ENCODE measurements at regions of chr15 and their contacts with region 1.

Region 1: DNA sequence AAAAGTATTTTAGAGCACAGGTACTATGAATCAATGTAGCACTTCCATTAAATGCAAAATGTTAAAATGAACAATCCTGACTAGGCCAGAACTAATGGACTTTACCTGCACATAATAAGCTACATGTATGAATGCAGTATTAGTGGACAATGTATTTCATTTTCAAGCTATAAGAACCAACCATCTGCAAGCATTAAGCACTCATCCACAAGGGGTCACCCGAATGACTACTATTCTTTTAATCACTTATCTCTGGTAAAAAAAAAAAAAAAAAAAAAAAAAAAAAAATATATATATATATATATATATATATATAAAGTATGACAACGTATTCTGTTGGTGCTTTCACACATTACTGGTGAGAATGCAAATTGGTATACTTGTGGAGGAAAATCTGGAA is 7.2 kb downstream of the HERC1 start:
- DNase-seq: no peak
- ATAC-seq: peak in 1 of 4 donors; percentile 28
- H3K4me3 ChIP-seq: no peak overlapping the region
- H3K27ac ChIP-seq: no peak overlapping the region
- H3K4me1 ChIP-seq: peaks cover 36% of the 10 kb centered on the region
- H3K27me3 ChIP-seq: no peaks in the 10 kb centered on the region
- CTCF ChIP-seq: peak; percentile 19

Region 2: GRCh38 chr15:63712828-63713520 is 113.6 kb before region 1 on chr15:
- intact Hi-C with region 1: no loop called
- DNase-seq: no peak
- ATAC-seq: no peak
- H3K4me3 ChIP-seq: no peak overlapping the region
- H3K27ac ChIP-seq: no peak overlapping the region
- H3K4me1 ChIP-seq: no peaks in the 10 kb centered on the region
- H3K27me3 ChIP-seq: no peaks in the 10 kb centered on the region
- CTCF ChIP-seq: no peak

Region 3: DNA sequence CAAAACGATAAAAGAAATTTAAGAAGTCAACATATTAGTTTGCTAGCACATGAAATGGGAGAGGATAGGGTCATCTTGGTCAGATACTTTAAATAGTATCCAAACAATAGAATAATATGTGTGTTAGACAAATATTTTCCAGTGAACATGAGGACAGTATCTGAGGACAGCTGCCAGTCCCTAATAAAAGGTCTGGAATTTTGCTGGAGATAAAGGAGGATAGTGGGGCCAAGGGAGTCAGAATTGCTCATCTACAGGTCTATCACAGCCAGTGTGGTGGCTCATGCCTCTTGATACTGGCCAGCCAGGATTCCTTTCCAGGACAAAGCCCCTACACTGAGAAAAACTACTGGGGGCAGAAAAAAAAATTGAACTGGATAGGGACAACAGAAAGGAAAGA is 66.8 kb before region 1 on chr15:
- intact Hi-C with region 1: loop called in 1 of 2 experiments (anchors 5 kb)
- DNase-seq: no peak
- ATAC-seq: peak in 2 of 4 donors; percentile 63 to 64
- H3K4me3 ChIP-seq: no peak overlapping the region
- H3K27ac ChIP-seq: peak overlapping the region; percentile 5
- H3K4me1 ChIP-seq: peaks cover 29% of the 10 kb centered on the region
- H3K27me3 ChIP-seq: no peaks in the 10 kb centered on the region
- CTCF ChIP-seq: no peak